ENCODE measurements at regions of chr7 and their contacts with region 1.

Region 1: DNA sequence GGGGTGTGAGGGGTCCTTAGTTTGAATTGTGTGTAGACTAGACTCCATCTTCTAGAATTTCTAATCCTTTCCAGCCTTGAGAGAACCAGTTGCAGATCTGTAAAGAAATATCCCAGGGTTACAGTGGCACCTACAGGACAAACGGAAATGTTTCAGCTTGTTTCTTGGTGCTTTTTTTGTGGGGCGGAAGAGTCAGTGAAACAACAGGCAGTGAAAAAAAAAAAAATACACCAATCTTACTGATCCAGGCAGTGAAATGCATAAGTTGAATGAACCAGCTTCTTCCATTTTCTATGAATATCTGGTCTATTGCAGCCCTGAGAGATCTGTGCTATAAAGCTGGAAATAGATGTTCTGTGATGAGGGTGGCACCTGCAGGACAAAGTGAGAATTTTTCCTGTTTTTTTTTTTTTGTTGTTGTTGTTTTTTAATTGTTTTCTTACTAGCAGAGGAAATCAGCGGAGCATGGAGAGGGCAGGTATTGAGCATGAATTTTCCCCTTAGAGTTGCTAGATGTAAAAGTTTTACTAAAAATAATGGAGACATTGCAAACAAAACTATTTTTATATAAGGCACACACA is 81.9 kb upstream of the DYNC1I1 start:
- DNase-seq: no peak
- H3K4me3 Mint-ChIP-seq: no peak overlapping the region
- H3K27ac Mint-ChIP-seq: no peak overlapping the region
- H3K4me1 Mint-ChIP-seq: peaks cover 3% of the 10 kb centered on the region
- H3K27me3 Mint-ChIP-seq: peaks cover 6% of the 10 kb centered on the region

Region 2: GRCh38 chr7:95511716-95512260 is 178.7 kb before region 1 on chr7:
- intact Hi-C with region 1: loop called (anchors 1 kb)
- DNase-seq: peak; percentile 32
- H3K4me3 Mint-ChIP-seq: no peak overlapping the region
- H3K27ac Mint-ChIP-seq: no peak overlapping the region
- H3K4me1 Mint-ChIP-seq: peaks cover 4% of the 10 kb centered on the region
- H3K27me3 Mint-ChIP-seq: peaks cover 26% of the 10 kb centered on the region

Region 3: GRCh38 chr7:95527033-95527775 is 163.3 kb before region 1 on chr7:
- intact Hi-C with region 1: loop called (anchors 2 kb)
- DNase-seq: no peak
- H3K4me3 Mint-ChIP-seq: no peak overlapping the region
- H3K27ac Mint-ChIP-seq: no peak overlapping the region
- H3K4me1 Mint-ChIP-seq: no peaks in the 10 kb centered on the region
- H3K27me3 Mint-ChIP-seq: peaks cover 9% of the 10 kb centered on the region

Region 4: DNA sequence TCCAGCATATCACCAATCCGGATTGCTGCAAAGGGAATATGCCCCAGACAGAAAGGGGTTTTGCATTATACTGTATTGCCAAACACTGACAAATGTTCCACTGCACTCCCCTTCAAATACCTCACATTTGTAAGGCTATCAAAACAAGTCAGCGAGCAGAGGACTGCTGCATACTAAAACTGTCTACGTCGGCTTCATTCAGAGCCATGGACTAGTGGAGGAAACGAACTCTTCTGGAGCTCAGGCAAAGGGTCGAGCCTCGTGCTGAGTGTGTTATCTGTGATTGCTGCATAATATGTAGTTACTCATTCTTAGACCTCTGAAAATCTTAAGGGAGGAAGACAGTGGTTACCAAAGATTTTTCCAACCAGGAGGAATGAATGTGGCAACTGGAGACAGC is 282.1 kb after region 1 on chr7:
- intact Hi-C with region 1: no loop called
- DNase-seq: no peak
- H3K4me3 Mint-ChIP-seq: no peak overlapping the region
- H3K27ac Mint-ChIP-seq: no peak overlapping the region
- H3K4me1 Mint-ChIP-seq: no peaks in the 10 kb centered on the region
- H3K27me3 Mint-ChIP-seq: no peaks in the 10 kb centered on the region

Region 5: DNA sequence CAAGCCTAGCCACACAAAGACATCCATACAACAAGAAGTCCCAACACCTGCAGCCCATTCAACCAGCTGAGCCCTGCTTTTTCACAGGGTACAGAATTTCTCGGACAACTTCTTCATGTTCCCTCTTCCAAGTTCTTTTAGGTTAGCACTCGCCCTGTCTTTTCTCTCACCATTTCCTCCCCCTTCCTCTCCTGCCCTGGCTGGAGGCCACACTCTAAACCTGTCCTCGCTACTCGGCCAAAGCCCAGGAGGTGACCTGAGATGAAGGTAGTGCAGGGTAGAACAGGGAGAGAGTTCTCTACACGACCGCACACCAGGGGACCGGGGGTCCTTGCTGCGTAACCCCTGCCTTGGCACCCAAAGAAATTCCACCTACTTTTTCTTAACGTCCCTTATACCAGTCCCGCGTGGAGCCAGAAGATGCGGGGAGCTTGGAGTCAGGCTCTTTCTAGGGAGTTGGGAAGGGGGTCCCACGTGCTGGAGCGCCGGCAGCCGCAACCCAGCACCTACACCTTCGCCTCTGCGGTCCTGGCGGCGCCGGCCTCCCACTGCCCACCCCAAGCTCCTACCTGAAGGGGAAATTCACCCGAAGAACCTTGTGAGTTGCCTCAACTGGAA is 1298.9 kb after region 1 on chr7:
- intact Hi-C with region 1: no loop called
- DNase-seq: no peak
- H3K4me3 Mint-ChIP-seq: no peak overlapping the region
- H3K27ac Mint-ChIP-seq: no peak overlapping the region
- H3K4me1 Mint-ChIP-seq: no peaks in the 10 kb centered on the region
- H3K27me3 Mint-ChIP-seq: peaks cover 69% of the 10 kb centered on the region

Measured in activated T-helper 2 cell treated with anti-CD3 and anti-CD28 coated beads, Interferon-gamma antibody, Interleukin-2, Interleukin-4, amounts not matched to agents 10 μg/mL and 5 μg/mL and 100 μg/mL, durations not matched to agents 14 hours and 24 hours and 36 hours (primary cell).